Right ventricle myocardium inferior (tissue), 1 donor: ENCODE measurements at regions of chr11 and their contacts with region 1.

Region 1: GRCh38 chr11:64652586-64653387 is 61.8 kb downstream of the SLC22A12 start:
- DNase-seq: no peak
- ATAC-seq: peak; percentile 71

Region 2: DNA sequence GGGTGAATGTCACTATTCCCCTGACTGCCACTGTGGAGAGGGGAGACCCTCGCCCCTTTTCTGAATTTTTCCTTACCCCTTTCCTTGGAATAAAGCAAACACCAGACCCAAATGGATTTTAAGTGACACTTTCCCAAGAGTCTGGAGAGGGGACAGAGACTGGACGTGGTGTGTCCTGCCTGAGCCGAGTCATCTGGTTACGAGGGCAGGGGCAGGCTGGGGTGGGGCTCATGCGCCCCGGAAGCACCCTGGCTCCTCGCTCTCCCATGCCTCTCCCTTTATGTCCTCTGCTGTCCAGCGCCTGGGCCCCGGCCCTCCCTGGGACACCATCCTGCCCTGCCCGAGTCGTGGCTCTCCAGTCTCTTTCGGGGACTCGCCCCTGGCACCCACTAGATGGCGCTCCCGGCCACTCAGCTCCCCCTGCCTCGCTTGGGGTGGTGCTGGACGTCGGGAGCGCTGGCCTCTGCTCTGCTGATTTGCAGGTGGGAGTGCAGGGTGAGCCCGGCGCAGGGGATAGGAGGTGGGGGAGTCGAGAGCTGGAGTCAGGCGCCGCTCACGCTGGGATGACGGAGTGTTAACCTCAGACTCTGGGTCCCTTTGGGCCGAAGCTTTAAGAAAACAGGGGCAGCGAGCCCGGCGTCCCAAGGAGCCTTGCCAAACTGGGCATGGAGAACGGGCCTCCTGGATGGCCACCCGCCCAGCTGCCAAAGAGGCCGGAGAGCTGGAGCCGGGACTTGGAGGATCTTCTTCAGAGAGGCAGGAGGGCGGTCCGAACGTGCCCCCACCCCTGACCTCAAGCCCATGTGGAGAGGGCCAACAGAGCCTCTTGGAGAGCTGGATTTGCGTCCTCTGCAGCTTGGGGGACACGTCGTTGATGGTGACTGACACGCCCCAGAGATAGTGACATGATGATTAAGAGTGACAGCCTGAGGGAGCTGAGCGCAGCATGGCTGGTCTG is 203.9 kb before region 1 on chr11:
- intact Hi-C with region 1: loop called (anchors 1 kb)
- DNase-seq: peak; percentile 93
- ATAC-seq: peak; percentile 94

Region 3: GRCh38 chr11:64553551-64554201 is 99.1 kb before region 1 on chr11:
- intact Hi-C with region 1: loop called (anchors 1 kb)
- DNase-seq: no peak
- ATAC-seq: peak; percentile 71

Region 4: DNA sequence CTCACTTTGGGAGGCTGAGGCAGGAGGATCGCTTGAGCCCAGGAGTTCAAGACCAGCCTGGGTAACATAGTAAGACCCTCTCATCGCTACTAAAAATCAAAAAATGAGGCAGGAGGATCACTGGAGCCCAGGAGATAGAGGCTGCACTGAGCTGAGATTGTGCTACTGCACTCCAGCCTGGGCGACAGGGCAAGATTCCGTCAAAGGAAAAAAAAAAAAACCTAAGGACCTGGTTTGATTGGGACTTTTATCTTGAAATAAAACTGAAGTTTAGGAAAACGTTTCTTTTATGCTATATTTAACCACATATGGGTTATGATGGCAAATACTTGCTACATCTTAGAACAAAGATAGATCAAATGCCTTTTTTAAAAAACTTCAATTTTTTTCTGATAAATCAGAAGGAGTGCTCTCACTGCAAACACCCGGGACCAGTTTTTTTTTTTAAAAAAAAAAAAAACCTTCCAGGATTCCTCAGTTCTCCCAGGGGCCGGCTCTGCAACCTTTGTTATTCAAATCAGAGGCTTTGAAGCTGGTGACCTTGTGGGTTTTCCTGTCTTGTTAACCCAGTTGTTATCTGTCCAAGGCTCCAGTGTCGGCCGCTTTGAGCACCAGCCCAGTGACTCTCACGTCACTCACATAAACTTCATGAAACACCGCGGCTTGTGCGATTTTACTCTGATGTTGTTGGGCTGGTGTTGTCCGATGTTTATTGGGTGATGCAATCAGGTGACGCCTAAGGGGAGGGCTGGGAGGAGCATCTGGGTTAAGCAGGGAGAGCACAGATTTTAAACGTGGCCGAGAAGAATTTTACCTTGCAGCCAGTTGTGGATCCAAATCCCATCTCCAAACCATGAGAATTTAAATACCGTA is 86.5 kb before region 1 on chr11:
- intact Hi-C with region 1: no loop called
- DNase-seq: no peak
- ATAC-seq: peak; percentile 51